ENCODE measurements at regions of chr2 and their contacts with region 1.

Region 1: GRCh38 chr2:105444219-105444598 is 45.4 kb upstream of the FHL2 start:
- DNase-seq: no peak
- ATAC-seq: no peak
- H3K4me3 ChIP-seq: no peak overlapping the region
- H3K27ac ChIP-seq: no peak overlapping the region
- H3K4me1 ChIP-seq: peaks cover 0 to 15% (median 0%) of the 10 kb centered on the region in 12 donors
- H3K27me3 ChIP-seq: no peaks in the 10 kb centered on the region
- CTCF ChIP-seq: no peak
- POLR2A ChIP-seq: no peak

Region 2: DNA sequence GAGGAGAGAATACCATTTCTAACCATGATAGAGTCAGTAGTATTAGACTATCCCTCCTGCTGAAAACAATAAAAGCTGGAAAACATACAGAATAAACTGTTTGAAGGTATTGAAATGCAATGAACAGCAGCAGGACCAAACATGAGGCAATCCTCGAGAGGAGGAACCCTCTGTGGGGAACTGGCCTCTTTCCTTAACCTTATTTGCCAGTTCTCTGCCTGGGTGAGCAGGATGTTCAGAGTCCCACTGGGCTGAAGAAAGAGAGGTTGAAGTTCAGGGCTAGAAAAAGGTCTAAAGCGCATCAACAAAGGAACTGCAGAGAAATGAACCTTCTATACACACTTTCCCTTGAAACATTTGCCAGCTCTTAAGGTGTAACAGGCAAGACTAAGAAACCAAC is 34.5 kb after region 1 on chr2:
- intact Hi-C with region 1: loop called in 3 of 10 experiments (anchors 5 kb)
- DNase-seq: no peak
- ATAC-seq: no peak
- H3K4me3 ChIP-seq: no peak overlapping the region
- H3K27ac ChIP-seq: no peak overlapping the region
- H3K4me1 ChIP-seq: no peaks in the 10 kb centered on the region
- H3K27me3 ChIP-seq: no peaks in the 10 kb centered on the region
- CTCF ChIP-seq: no peak
- POLR2A ChIP-seq: no peak

Measured in heart left ventricle (tissue), 16 donors.